ENCODE measurements at regions of chr12 and their contacts with region 1.

Region 1: DNA sequence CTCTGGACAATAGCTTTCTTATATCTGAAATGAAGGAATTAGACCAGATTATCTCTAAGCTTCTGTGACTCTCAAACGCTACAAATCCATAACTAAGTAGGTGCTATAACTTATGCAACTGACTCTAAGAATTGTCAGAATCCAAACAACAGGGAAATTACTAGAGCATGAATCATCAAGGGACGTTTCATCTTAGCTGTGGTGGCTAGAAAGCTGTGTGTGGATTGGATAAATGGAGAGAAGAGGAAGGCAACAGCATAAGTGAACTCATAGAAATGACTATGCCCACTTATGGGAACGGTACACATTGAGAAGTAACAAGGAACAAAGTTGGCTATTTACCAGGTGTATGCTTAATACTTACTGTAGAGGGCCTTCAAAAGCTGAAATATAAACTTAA is 96.0 kb upstream of the NEDD1 start:
- DNase-seq: no peak
- ATAC-seq: no peak
- H3K4me3 ChIP-seq: no peak overlapping the region
- H3K27ac ChIP-seq: no peak overlapping the region
- H3K4me1 ChIP-seq: no peaks in the 10 kb centered on the region
- H3K27me3 ChIP-seq: no peaks in the 10 kb centered on the region
- CTCF ChIP-seq: no peak
- EP300 ChIP-seq: no peak
- POLR2A ChIP-seq: no peak
- RAD21 ChIP-seq: no peak

Region 2: DNA sequence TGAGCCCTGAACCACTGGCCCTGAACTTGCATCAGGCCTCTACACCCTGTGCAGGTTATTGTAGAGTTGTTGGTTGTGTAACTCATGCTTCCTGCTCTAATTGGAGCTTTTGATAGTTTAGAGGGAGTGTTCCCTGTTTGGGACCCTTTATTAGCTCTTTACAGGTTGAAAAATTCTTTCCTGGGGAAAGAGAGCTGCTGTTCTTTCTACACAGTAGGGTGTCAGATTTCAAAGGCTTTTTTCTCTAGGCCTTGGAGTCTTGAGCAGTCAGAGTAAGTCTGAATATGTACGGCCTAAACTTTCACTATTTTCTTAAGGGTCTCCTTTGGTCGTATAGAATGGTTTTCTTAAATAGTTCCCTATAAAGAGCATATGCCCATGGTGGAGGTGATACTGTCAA is 35.2 kb after region 1 on chr12:
- CTCF ChIA-PET with region 1: no interaction called
- POLR2A ChIA-PET with region 1: no interaction called
- RAD21 ChIA-PET with region 1: no interaction called
- SMC1A ChIA-PET with region 1: no interaction called
- in situ Hi-C with region 1: no loop called
- intact Hi-C with region 1: loop called (anchors 1 kb)
- DNase-seq: no peak
- ATAC-seq: no peak
- H3K4me3 ChIP-seq: no peak overlapping the region
- H3K27ac ChIP-seq: no peak overlapping the region
- H3K4me1 ChIP-seq: no peaks in the 10 kb centered on the region
- H3K27me3 ChIP-seq: no peaks in the 10 kb centered on the region
- CTCF ChIP-seq: no peak
- EP300 ChIP-seq: no peak
- POLR2A ChIP-seq: no peak
- RAD21 ChIP-seq: no peak